Posterior cingulate gyrus (tissue), 11 donors: ENCODE measurements at regions of chr18 and their contacts with region 1.

Region 1: DNA sequence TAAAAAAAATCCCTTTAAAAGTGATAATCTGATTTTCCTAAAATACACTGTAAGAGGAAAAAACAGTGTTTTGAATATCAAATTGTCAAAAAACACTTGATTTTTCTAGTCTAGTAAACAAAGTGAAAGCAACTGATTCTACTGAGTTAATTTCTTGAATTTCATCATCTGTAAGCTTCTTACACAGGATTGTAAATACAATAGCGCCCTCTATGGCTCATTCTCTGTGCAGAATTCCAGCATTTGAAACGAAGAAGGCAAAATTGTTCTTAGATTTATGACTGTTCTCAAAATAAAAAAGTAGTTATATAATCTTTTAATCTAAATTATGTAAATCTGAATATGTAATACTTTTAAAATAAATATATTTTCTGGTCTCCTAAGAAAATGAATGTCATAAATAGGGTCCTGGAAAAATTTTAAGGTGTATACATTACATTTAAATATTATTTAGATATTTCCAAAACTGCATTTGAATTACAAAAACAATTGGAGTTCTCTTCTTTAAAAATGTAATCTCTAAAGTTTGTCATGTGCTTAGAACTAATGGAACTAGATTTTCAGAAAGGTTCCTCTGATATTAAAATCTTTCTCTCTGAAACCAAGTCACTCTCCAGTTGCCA is 176.9 kb upstream of the MC4R start:
- DNase-seq: peak in 1 of 10 donors; percentile 27

Region 2: GRCh38 chr18:59837586-59837985 is 711.9 kb before region 1 on chr18:
- intact Hi-C with region 1: loop called (anchors 5 kb)
- DNase-seq: peak in 3 of 10 donors; percentile 2 to 17 (median 10)

Region 3: GRCh38 chr18:59988098-59988706 is 561.2 kb before region 1 on chr18:
- intact Hi-C with region 1: loop called (anchors 1 kb)
- DNase-seq: peak in 7 of 10 donors; percentile 51 to 86 (median 64)

Region 4: DNA sequence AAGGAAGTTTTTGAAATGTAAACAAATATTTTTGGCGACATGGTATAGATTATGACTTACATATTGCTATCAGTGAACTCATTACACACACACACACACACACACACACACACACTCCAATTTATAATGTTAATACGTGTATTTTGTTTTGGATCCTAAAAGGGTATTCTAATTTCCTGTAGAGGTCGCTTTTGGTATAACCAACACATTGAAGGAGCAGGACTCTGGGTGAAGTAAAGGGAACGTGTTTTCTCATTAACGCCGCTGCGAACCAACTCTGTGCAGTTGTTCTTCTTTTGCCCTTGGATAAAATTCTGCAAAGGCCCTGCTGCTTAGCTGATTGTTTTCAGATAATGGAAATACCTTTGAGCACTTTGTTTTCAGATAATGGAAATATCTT is 459.3 kb before region 1 on chr18:
- intact Hi-C with region 1: loop called (anchors 10 kb)
- DNase-seq: no peak

Region 5: GRCh38 chr18:60189856-60190255 is 359.6 kb before region 1 on chr18:
- intact Hi-C with region 1: no loop called
- DNase-seq: no peak

Region 6: DNA sequence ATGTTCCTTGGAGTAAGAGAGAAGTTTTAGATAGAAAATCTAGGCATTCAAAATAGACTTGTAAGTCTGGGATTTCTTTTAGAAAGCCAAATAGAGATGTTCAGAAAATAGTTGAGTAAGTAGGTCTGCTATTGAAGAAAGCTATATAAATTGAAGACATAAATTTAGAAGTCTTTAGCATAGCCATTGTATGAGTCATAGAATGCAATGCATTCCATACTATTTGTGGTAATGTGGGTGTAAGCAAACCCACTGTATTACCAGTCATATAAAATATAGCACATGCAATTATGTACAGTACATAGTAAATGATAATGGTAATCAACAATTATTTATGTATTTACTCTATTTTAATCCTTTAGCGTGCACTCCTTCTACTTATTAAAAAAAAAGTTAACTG is 190.9 kb before region 1 on chr18:
- intact Hi-C with region 1: no loop called
- DNase-seq: no peak

Region 7: GRCh38 chr18:60568220-60568619 is 18.8 kb after region 1 on chr18:
- intact Hi-C with region 1: no loop called
- DNase-seq: no peak

Region 8: GRCh38 chr18:60861575-60861974 is 312.1 kb after region 1 on chr18:
- intact Hi-C with region 1: no loop called
- DNase-seq: no peak